HepG2 (cell line): ENCODE measurements at regions of chr11 and their contacts with region 1.

Region 1: GRCh38 chr11:113289431-113290187 is 24.8 kb upstream of the TTC12 start:
- DNase-seq: peak; percentile 21
- ATAC-seq: peak; percentile 90
- H3K4me3 ChIP-seq: no peak overlapping the region
- H3K27ac ChIP-seq: no peak overlapping the region
- H3K4me1 ChIP-seq: peaks cover 21% of the 10 kb centered on the region
- H3K27me3 ChIP-seq: peaks cover 0 to 3% of the 10 kb centered on the region in 2 experiments; a peak in 1 of 5 replicates
- CTCF ChIP-seq: peak; percentile 97
- EP300 ChIP-seq: no peak
- POLR2A ChIP-seq: no peak
- RAD21 ChIP-seq: peak; percentile 91

Region 2: GRCh38 chr11:112219476-112220232 is 1070.0 kb before region 1 on chr11:
- CTCF ChIA-PET with region 1: interaction called, 3 read pairs
- POLR2A ChIA-PET with region 1: no interaction called
- in situ Hi-C with region 1: no loop called
- intact Hi-C with region 1: loop called (anchors 10 kb)
- DNase-seq: peak; percentile 72
- ATAC-seq: peak; percentile 93
- H3K4me3 ChIP-seq: no peak overlapping the region
- H3K27ac ChIP-seq: no peak overlapping the region
- H3K4me1 ChIP-seq: peaks cover 46% of the 10 kb centered on the region
- H3K27me3 ChIP-seq: no peaks in the 10 kb centered on the region
- CTCF ChIP-seq: peak; percentile 91
- EP300 ChIP-seq: no peak
- POLR2A ChIP-seq: no peak
- RAD21 ChIP-seq: peak; percentile 80

Region 3: GRCh38 chr11:112289588-112290492 is 999.8 kb before region 1 on chr11:
- CTCF ChIA-PET with region 1: no interaction called
- POLR2A ChIA-PET with region 1: no interaction called
- in situ Hi-C with region 1: loop called (anchors 10 kb)
- intact Hi-C with region 1: loop called (anchors 1 kb)
- DNase-seq: peak; percentile 21
- ATAC-seq: peak; percentile 99
- H3K4me3 ChIP-seq: peak overlapping the region; percentile 51 to 77 (median 56)
- H3K27ac ChIP-seq: no peak overlapping the region
- H3K4me1 ChIP-seq: peaks cover 13% of the 10 kb centered on the region
- H3K27me3 ChIP-seq: peaks cover 0 to 3% of the 10 kb centered on the region in 2 experiments; a peak in 2 of 5 replicates
- CTCF ChIP-seq: peak; percentile 93
- EP300 ChIP-seq: no peak
- POLR2A ChIP-seq: no peak
- RAD21 ChIP-seq: peak; percentile 94

Region 4: GRCh38 chr11:112795142-112795815 is 494.3 kb before region 1 on chr11:
- CTCF ChIA-PET with region 1: interaction called, 4 read pairs
- POLR2A ChIA-PET with region 1: no interaction called
- in situ Hi-C with region 1: no loop called
- intact Hi-C with region 1: loop called (anchors 2 kb)
- DNase-seq: peak; percentile 19
- ATAC-seq: peak; percentile 93
- H3K4me3 ChIP-seq: no peak overlapping the region
- H3K27ac ChIP-seq: no peak overlapping the region
- H3K4me1 ChIP-seq: no peaks in the 10 kb centered on the region
- H3K27me3 ChIP-seq: no peaks in the 10 kb centered on the region; a peak in 1 of 5 replicates
- CTCF ChIP-seq: peak; percentile 63
- EP300 ChIP-seq: no peak
- POLR2A ChIP-seq: no peak
- RAD21 ChIP-seq: no peak

Region 5: GRCh38 chr11:113113801-113114706 is 175.6 kb before region 1 on chr11:
- CTCF ChIA-PET with region 1: no interaction called
- POLR2A ChIA-PET with region 1: no interaction called
- in situ Hi-C with region 1: no loop called
- intact Hi-C with region 1: loop called (anchors 1 kb)
- DNase-seq: peak; percentile 3
- ATAC-seq: peak; percentile 97
- H3K4me3 ChIP-seq: no peak overlapping the region
- H3K27ac ChIP-seq: no peak overlapping the region
- H3K4me1 ChIP-seq: no peaks in the 10 kb centered on the region
- H3K27me3 ChIP-seq: 0 out of 5 replicates have a peak, but pooled peaks cover 0 to 2% of the 10 kb centered on the region in 2 experiments
- CTCF ChIP-seq: peak; percentile 61
- EP300 ChIP-seq: no peak
- POLR2A ChIP-seq: no peak
- RAD21 ChIP-seq: no peak

Region 6: DNA sequence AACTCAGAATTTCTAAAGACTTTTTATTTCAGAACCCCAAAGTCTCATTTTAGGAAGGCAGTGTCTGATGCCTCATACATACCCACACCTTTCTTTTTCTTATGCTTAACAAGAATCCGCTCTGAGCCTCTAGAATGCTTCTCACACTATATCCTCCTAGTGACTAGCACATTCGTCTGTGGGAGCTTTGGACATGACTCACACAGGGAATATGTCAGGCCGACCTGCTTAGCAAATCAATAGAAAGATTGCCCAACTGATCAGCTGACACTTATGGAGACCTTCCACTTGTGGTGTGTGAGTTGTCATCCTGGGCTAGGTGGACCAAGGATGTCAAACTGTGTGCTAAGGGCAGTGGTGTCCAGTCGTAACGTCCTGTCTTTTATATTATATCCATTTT is 105.1 kb before region 1 on chr11:
- CTCF ChIA-PET with region 1: no interaction called
- POLR2A ChIA-PET with region 1: no interaction called
- in situ Hi-C with region 1: no loop called
- intact Hi-C with region 1: no loop called
- DNase-seq: peak; percentile 35
- ATAC-seq: peak; percentile 70
- H3K4me3 ChIP-seq: no peak overlapping the region
- H3K27ac ChIP-seq: no peak overlapping the region
- H3K4me1 ChIP-seq: no peaks in the 10 kb centered on the region
- H3K27me3 ChIP-seq: peaks cover 0 to 21% of the 10 kb centered on the region in 2 experiments; a peak in 3 of 5 replicates
- CTCF ChIP-seq: no peak
- EP300 ChIP-seq: no peak
- POLR2A ChIP-seq: no peak
- RAD21 ChIP-seq: no peak

Region 7: GRCh38 chr11:113345978-113346377 is 56.4 kb after region 1 on chr11:
- CTCF ChIA-PET with region 1: no interaction called
- POLR2A ChIA-PET with region 1: no interaction called
- in situ Hi-C with region 1: no loop called
- intact Hi-C with region 1: no loop called
- DNase-seq: no peak
- ATAC-seq: no peak
- H3K4me3 ChIP-seq: no peak overlapping the region
- H3K27ac ChIP-seq: no peak overlapping the region
- H3K4me1 ChIP-seq: no peaks in the 10 kb centered on the region
- H3K27me3 ChIP-seq: no peaks in the 10 kb centered on the region
- CTCF ChIP-seq: no peak
- EP300 ChIP-seq: no peak
- POLR2A ChIP-seq: no peak
- RAD21 ChIP-seq: no peak